Activated CD4-positive, alpha-beta T cell treated with anti-CD3 and anti-CD28 coated beads, Interleukin-2, amount 10 ng/mL, durations not matched to agents 24 days and 14 days (primary cell): ENCODE measurements at regions of chr10 and their contacts with region 1.

Region 1: GRCh38 chr10:71383972-71384687 is 12.6 kb upstream of the CDH23 start:
- DNase-seq: peak; percentile 92
- H3K4me3 Mint-ChIP-seq: no peak overlapping the region
- H3K27ac Mint-ChIP-seq: no peak overlapping the region
- H3K4me1 Mint-ChIP-seq: no peaks in the 10 kb centered on the region
- H3K27me3 Mint-ChIP-seq: peaks cover 9% of the 10 kb centered on the region

Region 2: DNA sequence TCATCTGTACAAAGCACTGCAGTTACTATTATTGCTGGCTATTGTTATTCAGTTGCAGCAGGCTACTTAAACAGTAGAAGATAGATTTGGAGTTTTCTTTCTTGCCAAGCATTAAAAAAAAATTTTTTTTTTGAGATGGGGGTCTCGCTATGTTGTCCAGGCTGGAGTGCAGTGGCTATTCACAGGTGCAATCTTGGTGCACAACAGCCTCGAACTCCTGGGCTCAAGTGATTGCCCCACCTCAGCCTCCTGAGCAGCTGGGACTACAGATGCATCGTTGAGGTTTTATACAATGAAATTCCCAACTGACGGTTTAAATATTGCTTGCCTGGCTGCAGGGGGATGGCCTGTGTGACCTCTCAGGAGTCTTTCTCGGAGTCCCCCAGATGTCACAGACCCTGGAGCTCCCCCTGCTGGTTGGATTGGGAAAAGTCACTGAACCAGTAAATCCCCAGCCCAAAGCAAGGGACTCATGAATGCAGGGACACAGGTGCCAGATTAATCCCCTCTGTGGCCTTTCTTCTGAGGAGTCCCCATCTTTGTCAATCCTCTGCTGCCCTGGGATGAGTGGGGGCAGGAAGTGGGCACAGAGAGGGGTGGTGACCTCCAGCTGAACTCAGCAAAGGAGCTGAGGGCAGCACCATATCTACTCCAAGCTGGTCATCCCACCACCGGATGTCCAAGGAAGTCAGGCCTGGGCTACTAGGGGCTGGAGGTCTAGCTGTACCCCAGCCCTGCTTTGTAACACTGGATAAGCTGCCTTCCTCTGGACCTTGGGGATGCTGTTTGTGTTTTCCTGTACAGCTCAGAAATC is 185.9 kb after region 1 on chr10:
- intact Hi-C with region 1: loop called (anchors 1 kb)
- DNase-seq: peak; percentile 93
- H3K4me3 Mint-ChIP-seq: no peak overlapping the region
- H3K27ac Mint-ChIP-seq: no peak overlapping the region
- H3K4me1 Mint-ChIP-seq: peaks cover 3% of the 10 kb centered on the region
- H3K27me3 Mint-ChIP-seq: no peaks in the 10 kb centered on the region

Region 3: DNA sequence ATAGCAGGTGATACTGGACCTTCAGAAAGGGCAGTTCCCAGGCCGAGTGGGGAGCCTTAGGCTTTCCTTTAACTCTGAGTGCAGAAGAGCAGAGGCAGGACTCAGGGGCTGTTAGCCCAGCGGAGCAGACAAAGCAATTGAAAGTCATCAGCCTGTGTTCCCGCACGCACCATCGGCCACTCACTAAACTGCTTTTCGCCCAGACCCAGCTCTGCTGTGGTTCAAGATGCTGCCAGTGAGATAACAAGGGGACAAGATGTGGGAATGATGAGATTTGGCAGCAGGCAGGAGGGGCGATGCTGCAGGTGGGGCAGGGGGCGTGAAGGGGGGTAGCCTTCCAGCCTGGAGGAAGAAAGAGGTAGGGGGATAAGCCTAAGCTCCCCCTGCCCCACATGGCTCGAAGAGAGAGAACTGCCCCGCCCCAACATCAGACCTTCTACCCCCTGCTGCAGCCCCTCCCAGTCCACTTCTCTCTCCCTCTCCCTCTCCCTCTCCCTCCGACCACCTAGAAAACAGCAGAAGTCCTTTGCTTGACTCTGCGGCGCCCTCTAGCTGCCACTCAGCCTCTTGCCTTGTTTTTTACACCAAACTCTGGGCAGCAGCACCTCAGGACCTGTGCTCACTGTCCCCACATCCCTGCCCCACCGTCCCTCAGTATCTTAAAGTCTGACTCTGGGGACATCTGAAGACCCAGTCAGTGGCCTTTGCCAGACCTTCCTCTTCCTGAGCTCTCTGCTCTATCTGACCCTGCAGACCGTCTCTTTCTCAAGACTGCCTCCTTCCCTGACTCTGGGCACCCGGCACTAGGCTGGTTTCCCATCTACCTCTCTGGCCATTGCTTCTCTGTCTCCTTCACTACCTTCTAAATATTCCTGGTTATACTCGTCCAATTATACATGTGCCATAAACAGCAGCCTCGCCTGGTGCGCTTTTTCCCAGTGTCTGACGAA is 225.0 kb after region 1 on chr10:
- intact Hi-C with region 1: loop called (anchors 5 kb)
- DNase-seq: peak; percentile 87
- H3K4me3 Mint-ChIP-seq: no peak overlapping the region
- H3K27ac Mint-ChIP-seq: no peak overlapping the region
- H3K4me1 Mint-ChIP-seq: peaks cover 4% of the 10 kb centered on the region
- H3K27me3 Mint-ChIP-seq: peaks cover 3% of the 10 kb centered on the region

Region 4: DNA sequence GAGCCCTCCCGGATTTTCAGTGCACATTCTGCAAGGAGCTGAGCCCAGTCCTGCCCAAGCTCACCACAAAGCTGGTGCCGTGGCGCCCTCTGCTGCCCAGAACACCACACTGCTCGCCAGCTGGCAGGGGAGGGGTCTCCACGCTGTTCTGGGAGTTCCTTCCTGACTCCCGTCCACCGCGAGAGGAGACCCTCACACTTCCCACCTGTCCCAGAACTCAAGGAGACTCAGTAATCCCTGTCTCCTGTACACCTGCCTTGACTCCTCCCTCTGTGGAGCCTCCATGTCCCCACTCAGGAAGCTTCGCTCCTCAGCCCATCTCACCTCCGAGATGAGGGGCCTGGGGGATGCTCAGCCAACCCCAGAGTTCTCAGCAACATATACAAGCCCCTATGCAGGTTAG is 324.2 kb after region 1 on chr10:
- intact Hi-C with region 1: loop called (anchors 5 kb)
- DNase-seq: peak; percentile 91
- H3K4me3 Mint-ChIP-seq: no peak overlapping the region
- H3K27ac Mint-ChIP-seq: no peak overlapping the region
- H3K4me1 Mint-ChIP-seq: peaks cover 34% of the 10 kb centered on the region
- H3K27me3 Mint-ChIP-seq: no peaks in the 10 kb centered on the region

Region 5: GRCh38 chr10:71812016-71812912 is 428.1 kb after region 1 on chr10:
- intact Hi-C with region 1: loop called (anchors 1 kb)
- DNase-seq: peak; percentile 92
- H3K4me3 Mint-ChIP-seq: no peak overlapping the region
- H3K27ac Mint-ChIP-seq: peak overlapping the region; percentile 11
- H3K4me1 Mint-ChIP-seq: peaks cover 2% of the 10 kb centered on the region
- H3K27me3 Mint-ChIP-seq: no peaks in the 10 kb centered on the region